AG04450 (cell line): ENCODE measurements at regions of chr6 and their contacts with region 1.

Region 1: GRCh38 chr6:108492131-108492766 is 68.5 kb upstream of the FOXO3 start:
- DNase-seq: peak; percentile 7
- H3K4me3 ChIP-seq: no peak overlapping the region
- H3K27ac ChIP-seq: no peak overlapping the region
- H3K27me3 ChIP-seq: no peaks in the 10 kb centered on the region
- CTCF ChIP-seq: peak; percentile 70

Region 2: GRCh38 chr6:108002365-108003221 is 489.7 kb before region 1 on chr6:
- CTCF ChIA-PET with region 1: no interaction called
- POLR2A ChIA-PET with region 1: no interaction called
- DNase-seq: no peak
- H3K4me3 ChIP-seq: no peak overlapping the region
- H3K27ac ChIP-seq: no peak overlapping the region
- H3K27me3 ChIP-seq: peaks cover 13% of the 10 kb centered on the region
- CTCF ChIP-seq: no peak

Region 3: GRCh38 chr6:108052706-108053105 is 439.5 kb before region 1 on chr6:
- CTCF ChIA-PET with region 1: interaction called, 10 read pairs
- POLR2A ChIA-PET with region 1: no interaction called
- DNase-seq: no peak
- H3K4me3 ChIP-seq: no peak overlapping the region
- H3K27ac ChIP-seq: no peak overlapping the region
- H3K27me3 ChIP-seq: no peaks in the 10 kb centered on the region
- CTCF ChIP-seq: no peak

Region 4: GRCh38 chr6:108133594-108134179 is 358.6 kb before region 1 on chr6:
- CTCF ChIA-PET with region 1: interaction called, 10 read pairs
- POLR2A ChIA-PET with region 1: no interaction called
- DNase-seq: peak; percentile 39
- H3K4me3 ChIP-seq: peak overlapping the region; percentile 50
- H3K27ac ChIP-seq: no peak overlapping the region
- H3K27me3 ChIP-seq: peaks cover 31% of the 10 kb centered on the region
- CTCF ChIP-seq: 0 out of 2 replicates have a peak, but pooled peaks have one; percentile 8

Region 5: DNA sequence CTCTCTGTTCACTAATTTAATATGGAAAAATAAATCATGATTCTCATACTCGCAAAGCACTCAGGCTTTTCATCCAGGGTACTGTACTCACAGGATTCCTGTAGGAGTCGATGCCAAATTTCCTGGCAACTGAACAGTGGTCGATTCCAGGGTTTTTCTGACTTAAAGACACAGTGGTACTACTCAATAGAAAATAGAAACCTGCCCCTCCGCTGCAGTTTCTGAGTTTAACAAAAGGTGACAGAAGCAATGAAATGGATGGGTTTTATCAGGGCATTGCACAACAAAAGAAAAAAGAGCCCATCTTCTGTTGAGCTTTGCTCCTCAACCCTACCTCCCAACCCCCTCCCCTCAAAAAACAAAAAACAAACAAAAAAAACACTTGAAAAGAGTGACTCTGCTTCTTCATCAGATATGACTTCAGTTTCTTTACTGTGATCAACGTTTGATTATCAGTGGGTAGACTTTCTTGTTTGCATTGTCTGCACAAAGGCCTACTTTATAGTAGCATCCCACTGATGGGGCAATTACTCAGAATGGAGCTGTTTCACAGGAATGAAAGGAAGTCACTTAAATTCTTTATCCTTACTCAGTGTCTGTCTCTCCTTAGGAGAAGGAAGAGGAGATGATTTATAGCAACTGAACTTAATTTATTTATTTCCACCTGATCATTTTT is 27.7 kb before region 1 on chr6:
- CTCF ChIA-PET with region 1: interaction called, 14 read pairs
- POLR2A ChIA-PET with region 1: no interaction called
- DNase-seq: no peak
- H3K4me3 ChIP-seq: no peak overlapping the region
- H3K27ac ChIP-seq: no peak overlapping the region
- H3K27me3 ChIP-seq: no peaks in the 10 kb centered on the region
- CTCF ChIP-seq: no peak

Region 6: DNA sequence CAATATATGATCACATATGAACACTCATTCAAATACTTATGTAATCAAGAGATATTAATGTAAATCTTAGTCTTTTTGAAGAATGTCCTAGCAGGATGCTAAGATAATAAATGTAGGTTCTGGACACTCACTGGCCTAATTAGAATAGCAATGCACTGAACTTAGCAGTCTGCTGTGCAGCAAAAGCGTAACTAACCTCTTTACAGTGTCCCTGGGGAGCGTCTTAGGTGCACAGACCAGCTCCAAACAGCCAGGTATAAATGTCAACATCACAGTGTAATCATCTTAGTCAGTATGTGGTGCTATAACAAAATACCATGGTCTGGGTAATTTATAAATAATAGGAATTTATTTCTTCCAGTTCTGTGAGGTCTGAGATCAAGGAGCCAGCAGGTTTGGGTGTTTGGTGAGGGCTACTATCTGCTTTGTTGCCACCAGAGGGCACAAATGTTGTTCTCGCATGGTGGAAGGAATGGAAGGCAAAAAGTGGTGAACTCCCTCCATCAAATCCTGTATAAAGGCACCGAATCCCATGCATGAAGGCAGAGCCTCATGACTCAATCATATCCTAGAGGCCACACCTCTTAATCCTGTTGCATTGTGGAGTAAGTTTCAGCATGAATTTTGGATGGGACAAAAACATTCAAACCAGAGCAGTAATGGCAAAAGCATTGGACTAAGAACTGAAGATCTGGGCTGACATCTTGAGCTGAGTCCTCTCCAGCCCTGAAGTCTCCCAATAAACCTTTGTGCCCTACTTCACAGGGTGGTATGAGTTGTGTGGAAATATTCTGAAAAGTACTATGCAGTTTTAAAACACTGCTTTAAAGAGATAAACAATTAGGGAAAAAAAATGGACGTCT is 26.7 kb after region 1 on chr6:
- CTCF ChIA-PET with region 1: interaction called, 22 read pairs
- POLR2A ChIA-PET with region 1: no interaction called
- DNase-seq: no peak
- H3K4me3 ChIP-seq: no peak overlapping the region
- H3K27ac ChIP-seq: no peak overlapping the region
- H3K27me3 ChIP-seq: no peaks in the 10 kb centered on the region
- CTCF ChIP-seq: peak; percentile 58

Region 7: GRCh38 chr6:108558372-108559096 is 66.3 kb after region 1 on chr6:
- CTCF ChIA-PET with region 1: no interaction called
- POLR2A ChIA-PET with region 1: no interaction called
- DNase-seq: peak; percentile 100
- H3K4me3 ChIP-seq: peak overlapping the region; percentile 93
- H3K27ac ChIP-seq: peak overlapping the region; percentile 98
- H3K27me3 ChIP-seq: no peaks in the 10 kb centered on the region
- CTCF ChIP-seq: no peak

Region 8: DNA sequence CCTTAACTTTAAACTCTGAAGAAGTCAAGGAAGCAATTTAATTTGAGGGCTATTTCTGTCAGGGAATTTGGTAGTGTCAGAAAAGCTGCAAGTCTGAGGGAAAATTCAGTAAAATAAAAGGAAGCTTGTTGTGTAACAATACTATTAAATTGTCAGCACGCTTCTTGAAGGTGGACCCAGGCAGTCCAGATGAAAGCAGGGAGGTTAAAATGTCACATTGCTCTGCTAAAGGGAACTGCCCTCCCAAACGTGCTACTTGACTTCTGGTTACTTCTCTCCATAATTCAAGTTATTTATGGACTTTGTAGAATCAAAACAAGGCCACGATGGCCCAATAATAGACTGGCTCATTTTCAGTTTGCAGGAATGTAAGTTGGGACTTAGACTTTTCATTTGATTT is 327.8 kb after region 1 on chr6:
- CTCF ChIA-PET with region 1: no interaction called
- POLR2A ChIA-PET with region 1: no interaction called
- DNase-seq: no peak
- H3K4me3 ChIP-seq: no peak overlapping the region
- H3K27ac ChIP-seq: no peak overlapping the region
- H3K27me3 ChIP-seq: no peaks in the 10 kb centered on the region
- CTCF ChIP-seq: no peak